ENCODE measurements at regions of chr6 and their contacts with region 1.

Region 1: DNA sequence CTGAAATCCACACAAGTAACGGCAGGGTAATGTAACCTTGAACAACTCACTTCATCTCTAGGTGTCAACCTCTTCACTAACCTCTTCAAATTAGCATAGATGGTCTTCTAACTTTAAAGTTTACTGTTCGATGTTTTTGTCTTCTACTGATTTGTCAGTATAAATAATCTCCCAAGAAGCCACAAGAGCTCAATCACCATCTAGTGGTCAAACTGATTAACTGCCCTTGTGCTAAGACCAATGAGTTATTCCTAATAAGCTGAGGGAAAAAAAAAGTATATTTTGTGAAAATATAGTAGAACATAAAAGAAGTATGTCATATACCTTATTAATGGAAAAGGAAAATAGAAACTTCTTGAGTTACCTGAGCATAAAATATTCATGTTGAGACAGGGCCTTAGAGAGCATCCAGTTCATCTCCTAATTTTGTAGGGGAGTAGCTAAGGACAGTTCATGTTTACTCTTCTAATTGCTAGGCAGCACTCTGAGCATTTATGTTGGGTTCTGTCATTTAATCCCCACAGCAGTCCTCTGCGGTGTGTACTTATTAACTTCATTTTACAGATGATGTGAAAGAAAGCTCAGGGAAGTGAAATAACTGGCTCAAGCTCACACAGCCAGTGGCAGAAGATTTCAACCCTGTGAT is 317.1 kb downstream of the ESR1 start:
- DNase-seq: peak; percentile 81
- H3K4me3 ChIP-seq: no peak overlapping the region
- H3K27ac ChIP-seq: no peak overlapping the region
- H3K4me1 ChIP-seq: peaks cover 1% of the 10 kb centered on the region
- H3K27me3 ChIP-seq: no peaks in the 10 kb centered on the region
- CTCF ChIP-seq: peak; percentile 53 to 55
- POLR2A ChIP-seq: no peak

Region 2: DNA sequence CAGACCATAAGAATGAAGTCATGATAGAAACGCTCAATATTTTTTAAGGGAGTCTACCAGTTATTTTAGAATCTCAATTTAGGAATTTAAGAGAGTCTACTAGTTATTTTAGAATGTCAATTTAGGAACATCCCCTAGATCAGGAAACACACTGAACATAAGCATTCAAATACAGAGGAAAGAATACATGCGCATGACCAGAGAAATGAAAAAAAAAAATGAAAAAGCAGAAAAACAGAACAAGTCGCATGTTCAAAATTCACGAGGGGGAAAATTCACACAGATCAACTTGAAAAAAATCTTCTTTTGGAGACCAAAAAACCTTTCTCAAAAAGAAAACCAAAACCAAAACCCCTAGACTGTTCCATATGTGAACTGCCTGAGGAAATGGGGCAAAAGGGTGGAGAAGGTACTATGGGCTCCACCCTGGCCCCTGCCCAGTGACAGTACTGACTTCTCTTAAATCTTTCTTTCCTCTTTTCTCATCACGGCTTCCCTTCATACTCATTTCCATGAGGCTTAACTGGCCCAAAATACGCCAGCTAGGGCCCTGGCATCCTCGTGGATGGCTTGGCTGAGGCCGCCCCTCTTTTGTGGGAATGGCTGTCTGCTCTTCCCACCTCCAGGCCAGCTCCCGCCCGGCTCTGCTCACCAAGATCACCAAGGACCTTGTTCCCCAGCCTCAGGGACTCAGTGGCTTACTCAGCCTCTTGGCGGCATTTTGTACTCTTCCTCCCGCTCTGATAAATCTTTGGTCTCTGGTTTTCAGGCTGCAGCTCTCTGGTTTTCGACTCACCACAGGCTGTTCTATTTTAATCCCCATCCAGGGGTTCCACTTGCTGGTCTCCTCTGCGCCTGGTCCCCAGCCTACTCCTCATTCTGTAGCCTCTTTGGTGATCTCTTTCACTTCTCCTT is 744.4 kb before region 1 on chr6:
- CTCF ChIA-PET with region 1: no interaction called
- POLR2A ChIA-PET with region 1: no interaction called
- dilution Hi-C with region 1: no loop called
- intact Hi-C with region 1: no loop called
- DNase-seq: no peak
- H3K4me3 ChIP-seq: no peak overlapping the region
- H3K27ac ChIP-seq: no peak overlapping the region
- H3K4me1 ChIP-seq: peaks cover 4% of the 10 kb centered on the region
- H3K27me3 ChIP-seq: no peaks in the 10 kb centered on the region
- CTCF ChIP-seq: no peak
- POLR2A ChIP-seq: no peak

Region 3: DNA sequence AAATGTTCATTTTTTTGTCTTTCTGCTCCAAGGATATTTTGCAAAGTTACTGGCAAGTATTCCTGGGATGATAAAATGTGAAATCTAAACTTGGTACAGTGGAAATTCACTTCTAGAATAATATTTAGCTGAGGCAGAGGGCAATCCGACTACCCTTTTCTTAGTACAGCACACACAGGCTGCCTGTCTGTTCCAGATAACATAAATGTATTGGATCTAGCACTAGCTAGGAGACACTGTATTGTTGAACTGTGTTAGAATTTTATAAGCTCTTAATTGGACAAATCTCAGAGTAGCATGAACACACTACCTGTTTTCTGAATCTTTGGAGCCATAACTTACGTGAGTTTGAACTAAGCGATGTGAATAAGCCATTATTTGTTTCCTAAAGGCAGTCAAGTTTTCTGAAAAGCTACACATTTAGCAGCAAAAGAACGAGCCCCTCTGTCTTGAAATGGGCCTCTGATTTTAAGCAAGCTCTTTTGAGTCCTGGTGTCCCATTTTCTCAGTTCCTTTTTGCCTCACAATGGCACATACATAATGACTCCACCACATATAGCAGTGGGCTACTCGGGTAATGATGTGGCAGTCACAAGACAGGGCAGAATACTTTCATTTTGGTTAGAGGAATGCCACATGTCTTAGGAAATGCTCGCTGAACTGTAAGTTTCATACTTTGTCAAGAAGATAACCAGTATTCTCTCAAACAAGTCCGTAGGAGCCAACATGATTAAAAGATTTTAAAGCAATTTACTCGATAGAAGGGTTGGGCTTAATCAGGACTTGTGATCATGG is 433.6 kb before region 1 on chr6:
- CTCF ChIA-PET with region 1: interaction called, 11 read pairs
- POLR2A ChIA-PET with region 1: no interaction called
- dilution Hi-C with region 1: no loop called
- intact Hi-C with region 1: no loop called
- DNase-seq: no peak
- H3K4me3 ChIP-seq: no peak overlapping the region
- H3K27ac ChIP-seq: no peak overlapping the region
- H3K4me1 ChIP-seq: no peaks in the 10 kb centered on the region
- H3K27me3 ChIP-seq: peaks cover 0 to 2% of the 10 kb centered on the region in 2 experiments
- CTCF ChIP-seq: no peak
- POLR2A ChIP-seq: no peak

Region 4: GRCh38 chr6:151948002-151948743 is 176.4 kb before region 1 on chr6:
- CTCF ChIA-PET with region 1: interaction called, 10 read pairs
- POLR2A ChIA-PET with region 1: no interaction called
- dilution Hi-C with region 1: no loop called
- intact Hi-C with region 1: no loop called
- DNase-seq: no peak
- H3K4me3 ChIP-seq: no peak overlapping the region
- H3K27ac ChIP-seq: no peak overlapping the region
- H3K4me1 ChIP-seq: no peaks in the 10 kb centered on the region
- H3K27me3 ChIP-seq: no peaks in the 10 kb centered on the region
- CTCF ChIP-seq: no peak
- POLR2A ChIP-seq: no peak

Region 5: GRCh38 chr6:152085451-152085921 is 39.1 kb before region 1 on chr6:
- CTCF ChIA-PET with region 1: interaction called, 10 read pairs
- POLR2A ChIA-PET with region 1: no interaction called
- dilution Hi-C with region 1: no loop called
- intact Hi-C with region 1: no loop called
- DNase-seq: peak; percentile 59
- H3K4me3 ChIP-seq: no peak overlapping the region
- H3K27ac ChIP-seq: no peak overlapping the region
- H3K4me1 ChIP-seq: peaks cover 14% of the 10 kb centered on the region
- H3K27me3 ChIP-seq: no peaks in the 10 kb centered on the region
- CTCF ChIP-seq: no peak
- POLR2A ChIP-seq: no peak

Region 6: DNA sequence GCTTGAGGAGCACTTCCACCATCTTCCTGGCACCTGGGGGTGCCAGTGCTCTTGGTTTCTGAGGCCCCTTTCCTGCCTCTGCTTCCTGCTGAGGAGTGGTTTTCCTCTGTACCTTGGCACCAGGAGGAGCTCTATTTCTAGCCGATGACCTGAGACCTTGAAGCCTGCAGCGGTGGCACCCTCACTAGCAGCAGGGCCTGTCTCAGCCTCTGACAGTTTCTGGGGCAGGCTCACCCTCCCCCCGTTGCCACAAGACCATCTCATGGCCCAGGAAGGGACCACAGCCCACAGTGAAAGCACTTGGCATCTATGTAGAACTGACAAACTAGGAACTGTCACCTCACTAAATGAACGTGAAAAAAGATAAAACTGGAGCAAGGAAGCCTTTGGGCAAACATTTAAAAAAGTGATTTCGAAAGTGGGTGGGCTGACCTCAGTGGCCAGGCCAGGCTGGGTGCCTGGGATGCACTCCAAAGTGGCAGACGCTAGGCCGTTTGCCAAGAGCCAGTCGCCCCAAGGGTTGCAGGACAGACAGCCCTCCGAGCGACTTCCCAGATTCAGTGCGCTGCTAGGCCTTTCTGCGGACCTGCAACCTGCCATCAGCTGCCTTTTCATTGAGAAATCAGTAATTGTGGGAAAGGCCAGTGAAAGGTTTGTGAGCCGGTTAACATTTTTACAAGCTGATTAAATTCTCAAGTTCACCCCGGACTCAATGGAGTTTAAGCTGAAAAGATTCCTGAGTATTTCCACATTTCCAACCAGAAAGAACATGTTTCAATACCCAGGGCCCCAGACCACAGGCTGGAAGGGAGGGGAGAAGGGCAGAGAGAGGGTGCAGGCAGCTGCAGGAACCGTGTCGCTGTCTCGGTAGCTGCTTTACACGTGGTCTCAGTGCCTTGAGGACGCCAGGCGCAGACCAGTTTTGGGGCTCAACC is 13.4 kb before region 1 on chr6:
- CTCF ChIA-PET with region 1: interaction called, 23 read pairs
- POLR2A ChIA-PET with region 1: interaction called, 3 read pairs
- dilution Hi-C with region 1: no loop called
- intact Hi-C with region 1: no loop called
- DNase-seq: no peak
- H3K4me3 ChIP-seq: no peak overlapping the region
- H3K27ac ChIP-seq: no peak overlapping the region
- H3K4me1 ChIP-seq: peaks cover 3% of the 10 kb centered on the region
- H3K27me3 ChIP-seq: no peaks in the 10 kb centered on the region
- CTCF ChIP-seq: no peak
- POLR2A ChIP-seq: no peak

Region 7: DNA sequence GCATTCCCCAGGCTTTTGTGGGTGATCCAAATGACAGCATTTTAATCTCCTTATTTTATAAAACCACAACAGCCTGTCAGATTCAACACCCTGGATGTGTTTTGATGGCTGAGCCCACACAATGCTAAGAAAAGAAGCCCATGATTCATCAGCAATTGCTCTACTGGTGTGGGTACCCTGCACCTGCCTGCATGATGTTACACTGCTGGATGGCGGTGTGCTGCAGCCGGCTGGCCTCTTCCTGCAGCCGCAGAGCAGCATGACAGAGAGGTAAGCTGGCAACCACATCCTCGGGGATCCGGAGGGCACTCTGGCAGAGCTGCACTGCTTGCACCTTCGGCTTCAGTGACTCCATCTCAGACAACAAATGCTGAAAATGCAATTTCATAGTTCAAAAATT is 185.1 kb after region 1 on chr6:
- CTCF ChIA-PET with region 1: no interaction called
- POLR2A ChIA-PET with region 1: no interaction called
- dilution Hi-C with region 1: no loop called
- intact Hi-C with region 1: no loop called
- DNase-seq: no peak
- H3K4me3 ChIP-seq: no peak overlapping the region
- H3K27ac ChIP-seq: no peak overlapping the region
- H3K4me1 ChIP-seq: peaks cover 23% of the 10 kb centered on the region
- H3K27me3 ChIP-seq: no peaks in the 10 kb centered on the region
- CTCF ChIP-seq: no peak
- POLR2A ChIP-seq: no peak

Measured in endothelial cell of umbilical vein (primary cell).